Activated CD8-positive, alpha-beta T cell treated with anti-CD3 and anti-CD28 coated beads, Interleukin-2, amount 10 ng/mL, durations not matched to agents 7 days and 5 days (primary cell): ENCODE measurements at regions of chr9 and their contacts with region 1.

Region 1: GRCh38 chr9:77751341-77752091 is 103.4 kb upstream of the GNA14 start:
- DNase-seq: peak; percentile 29
- ATAC-seq: no peak
- H3K4me3 Mint-ChIP-seq: no peak overlapping the region
- H3K27ac Mint-ChIP-seq: no peak overlapping the region
- H3K4me1 Mint-ChIP-seq: peaks cover 7% of the 10 kb centered on the region
- H3K27me3 Mint-ChIP-seq: no peaks in the 10 kb centered on the region

Region 2: DNA sequence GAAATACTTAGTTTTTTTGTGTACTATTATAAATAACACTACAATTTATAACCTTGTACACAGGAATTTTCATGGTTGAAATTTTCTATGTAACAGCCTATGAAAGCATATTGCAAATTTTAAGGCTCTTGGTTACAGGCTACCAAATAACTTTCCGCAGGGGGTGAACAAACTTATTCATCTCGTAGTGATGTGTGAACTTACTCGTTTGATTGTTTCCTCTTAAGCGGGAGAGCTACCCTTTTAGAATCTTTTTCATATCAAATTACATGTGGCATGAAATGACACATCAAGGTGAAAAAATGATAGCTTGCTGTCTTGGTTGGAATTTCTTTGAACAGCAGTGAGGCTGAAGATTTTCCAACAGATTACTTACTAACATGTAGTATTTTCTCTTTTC is 12.6 kb before region 1 on chr9:
- CTCF ChIA-PET with region 1: interaction called, 10 read pairs
- POLR2A ChIA-PET with region 1: no interaction called
- DNase-seq: no peak
- ATAC-seq: no peak
- H3K4me3 Mint-ChIP-seq: no peak overlapping the region
- H3K27ac Mint-ChIP-seq: no peak overlapping the region
- H3K4me1 Mint-ChIP-seq: no peaks in the 10 kb centered on the region
- H3K27me3 Mint-ChIP-seq: no peaks in the 10 kb centered on the region

Region 3: GRCh38 chr9:77764894-77765780 is 13.6 kb after region 1 on chr9:
- CTCF ChIA-PET with region 1: interaction called, 11 read pairs
- POLR2A ChIA-PET with region 1: no interaction called
- DNase-seq: no peak
- ATAC-seq: no peak
- H3K4me3 Mint-ChIP-seq: no peak overlapping the region
- H3K27ac Mint-ChIP-seq: no peak overlapping the region
- H3K4me1 Mint-ChIP-seq: no peaks in the 10 kb centered on the region
- H3K27me3 Mint-ChIP-seq: no peaks in the 10 kb centered on the region

Region 4: GRCh38 chr9:77864211-77864889 is 112.8 kb after region 1 on chr9:
- CTCF ChIA-PET with region 1: no interaction called
- POLR2A ChIA-PET with region 1: no interaction called
- DNase-seq: no peak
- ATAC-seq: no peak
- H3K4me3 Mint-ChIP-seq: no peak overlapping the region
- H3K27ac Mint-ChIP-seq: no peak overlapping the region
- H3K4me1 Mint-ChIP-seq: peaks cover 4% of the 10 kb centered on the region
- H3K27me3 Mint-ChIP-seq: no peaks in the 10 kb centered on the region

Region 5: DNA sequence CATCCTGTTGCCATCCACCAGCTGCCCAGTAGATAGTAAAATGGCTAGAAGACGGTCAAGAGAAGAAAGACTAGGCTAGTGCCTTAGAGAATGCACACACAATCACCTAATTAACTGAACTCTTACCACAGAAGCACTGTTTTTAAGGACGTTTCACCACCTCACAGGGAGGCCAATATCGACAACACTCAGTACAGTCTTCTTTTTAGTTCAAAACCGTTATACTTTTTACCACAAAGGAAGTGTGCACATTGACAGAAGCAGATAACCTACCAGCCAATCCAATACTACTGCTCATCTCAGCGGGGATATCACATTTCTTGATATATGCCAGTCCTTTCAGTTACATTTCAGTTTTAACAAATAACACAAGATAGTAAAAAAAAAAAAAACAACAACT is 157.8 kb after region 1 on chr9:
- CTCF ChIA-PET with region 1: no interaction called
- POLR2A ChIA-PET with region 1: no interaction called
- DNase-seq: peak; percentile 46
- ATAC-seq: peak; percentile 98
- H3K4me3 Mint-ChIP-seq: peak overlapping the region; percentile 67
- H3K27ac Mint-ChIP-seq: peak overlapping the region; percentile 98
- H3K4me1 Mint-ChIP-seq: peaks cover 41% of the 10 kb centered on the region
- H3K27me3 Mint-ChIP-seq: no peaks in the 10 kb centered on the region